ENCODE measurements at regions of chr2 and their contacts with region 1.

Region 1: GRCh38 chr2:153718457-153718856 is 153.3 kb upstream of the GALNT13 start:
- DNase-seq: no peak
- ATAC-seq: no peak
- H3K4me3 ChIP-seq: no peak overlapping the region
- H3K27ac ChIP-seq: no peak overlapping the region
- H3K4me1 ChIP-seq: no peaks in the 10 kb centered on the region
- H3K27me3 ChIP-seq: no peaks in the 10 kb centered on the region
- CTCF ChIP-seq: no peak
- POLR2A ChIP-seq: no peak

Region 2: GRCh38 chr2:153509133-153509532 is 209.3 kb before region 1 on chr2:
- intact Hi-C with region 1: loop called in 1 of 2 experiments (anchors 10 kb)
- DNase-seq: no peak
- ATAC-seq: no peak
- H3K4me3 ChIP-seq: no peak overlapping the region
- H3K27ac ChIP-seq: no peak overlapping the region
- H3K4me1 ChIP-seq: no peaks in the 10 kb centered on the region
- H3K27me3 ChIP-seq: no peaks in the 10 kb centered on the region
- CTCF ChIP-seq: no peak
- POLR2A ChIP-seq: no peak

Region 3: GRCh38 chr2:153858250-153858649 is 139.8 kb after region 1 on chr2:
- intact Hi-C with region 1: no loop called
- DNase-seq: no peak
- ATAC-seq: no peak
- H3K4me3 ChIP-seq: no peak overlapping the region
- H3K27ac ChIP-seq: no peak overlapping the region
- H3K4me1 ChIP-seq: no peaks in the 10 kb centered on the region
- H3K27me3 ChIP-seq: no peaks in the 10 kb centered on the region
- CTCF ChIP-seq: no peak
- POLR2A ChIP-seq: no peak

Measured in right lobe of liver (tissue), 6 donors.